Dorsolateral prefrontal cortex (tissue), 120 donors: ENCODE measurements at regions of chr11 and their contacts with region 1.

Region 1: GRCh38 chr11:71453037-71453898 is at the start of gene NADSYN1:
- DNase-seq: peak; percentile 95 to 98 (median 96)
- H3K4me3 ChIP-seq: peak within 1 kb of the TSS; percentile 71 to 100 (median 94)
- H3K27ac ChIP-seq: peak within 1 kb of the TSS; percentile 38 to 97 (median 91)
- H3K27me3 ChIP-seq: no peaks in the 10 kb centered on the region
- CTCF ChIP-seq: peak in 17 of 56 donors; percentile 3 to 39 (median 21)
- total RNA-seq, gene NADSYN1: 44.1 to 151 (median 75.1) TPM

Region 2: GRCh38 chr11:69670158-69670845 is 1783.0 kb before region 1 on chr11:
- intact Hi-C with region 1: loop called in 1 of 2 experiments (anchors 10 kb)
- DNase-seq: peak; percentile 55 to 92 (median 89)
- H3K4me3 ChIP-seq: peak overlapping the region in 31 of 59 donors; percentile 1 to 47 (median 28)
- H3K27ac ChIP-seq: peak overlapping the region in 33 of 59 donors; percentile 0 to 81 (median 47)
- H3K27me3 ChIP-seq: no peaks in the 10 kb centered on the region
- CTCF ChIP-seq: peak; percentile 81 to 98 (median 95)

Region 3: DNA sequence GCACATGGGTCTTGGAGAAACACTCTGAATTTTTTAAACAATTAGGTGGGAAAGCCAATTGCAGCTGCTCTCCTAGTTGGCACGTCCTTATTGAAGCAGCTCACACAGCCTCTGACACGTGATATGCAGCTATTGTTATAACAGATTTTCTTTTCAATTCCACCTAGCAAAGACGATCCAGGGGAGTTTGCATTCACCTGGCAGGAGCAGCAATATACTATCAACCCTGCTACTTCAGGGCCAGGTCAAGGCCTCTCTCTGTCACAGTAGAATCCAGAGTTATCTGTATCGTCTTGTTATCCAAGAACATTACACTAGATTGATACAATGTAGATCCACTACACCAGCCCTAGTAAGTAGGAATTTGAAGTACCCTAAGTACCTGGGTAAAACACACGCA is 121.2 kb after region 1 on chr11:
- intact Hi-C with region 1: loop called in 1 of 2 experiments (anchors 10 kb)
- DNase-seq: no peak
- H3K4me3 ChIP-seq: no peak overlapping the region
- H3K27ac ChIP-seq: no peak overlapping the region
- H3K27me3 ChIP-seq: peaks cover 0 to 3% (median 0%) of the 10 kb centered on the region in 45 donors
- CTCF ChIP-seq: no peak